CD4-positive, alpha-beta T cell (primary cell): ENCODE measurements at regions of chr12 and their contacts with region 1.

Region 1: GRCh38 chr12:95942524-95943329 is at the start of gene CCDC38:
- DNase-seq: peak; percentile 70 to 92 (median 79)
- ATAC-seq: peak; percentile 94
- H3K4me3 ChIP-seq: peak within 1 kb of the TSS; percentile 84
- H3K4me3 Mint-ChIP-seq: peak within 1 kb of the TSS; percentile 97
- H3K27ac ChIP-seq: peak within 1 kb of the TSS; percentile 61 to 76
- H3K27ac Mint-ChIP-seq: peak within 1 kb of the TSS; percentile 88
- H3K4me1 ChIP-seq: peaks cover 14% of the 10 kb centered on the region
- H3K4me1 Mint-ChIP-seq: peaks cover 10% of the 10 kb centered on the region
- H3K27me3 ChIP-seq: no peaks in the 10 kb centered on the region
- H3K27me3 Mint-ChIP-seq: no peaks in the 10 kb centered on the region
- CTCF ChIP-seq: no peak
- total RNA-seq, gene CCDC38: 0.11 TPM in 1 of 2 experiments, not detected in the other

Region 2: DNA sequence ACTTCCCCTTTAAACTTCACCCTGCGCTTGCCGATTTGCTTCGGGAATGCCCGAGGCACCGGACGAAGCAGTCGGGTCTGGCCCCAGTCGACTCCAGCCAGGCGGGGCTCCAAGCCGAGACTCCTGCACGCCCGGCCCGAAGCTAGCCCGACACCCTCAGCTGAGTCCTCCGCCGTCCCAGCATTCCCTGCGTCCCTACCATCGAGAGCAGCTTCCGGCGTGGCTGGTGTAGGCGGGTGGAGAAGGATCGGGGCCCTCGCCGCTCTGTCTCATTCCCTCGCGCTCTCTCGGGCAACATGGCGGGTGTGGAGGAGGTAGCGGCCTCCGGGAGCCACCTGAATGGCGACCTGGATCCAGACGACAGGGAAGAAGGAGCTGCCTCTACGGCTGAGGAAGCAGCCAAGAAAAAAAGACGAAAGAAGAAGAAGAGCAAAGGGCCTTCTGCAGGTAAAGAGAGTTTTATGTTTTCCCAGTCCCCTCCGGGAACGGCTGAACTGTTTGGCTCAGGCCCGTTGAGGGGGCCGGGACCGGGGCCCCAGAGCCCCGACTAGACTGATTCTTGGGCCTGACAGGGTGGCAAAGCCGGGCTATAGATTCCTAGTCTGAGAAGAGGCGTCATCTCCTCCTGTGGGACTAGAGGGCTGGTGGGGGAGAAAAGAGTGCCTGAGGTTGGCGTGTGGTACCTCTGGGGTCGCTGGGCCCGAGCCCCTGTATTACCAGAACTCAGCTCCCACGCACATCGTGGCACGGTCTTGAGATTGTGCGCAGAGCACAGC is 468.7 kb before region 1 on chr12 and contains the start of gene METAP2:
- CTCF ChIA-PET with region 1: no interaction called
- POLR2A ChIA-PET with region 1: interaction called, 10 read pairs
- intact Hi-C with region 1: loop called in 1 of 2 experiments (anchors 5 kb)
- DNase-seq: peak; percentile 82 to 95 (median 88)
- ATAC-seq: peak; percentile 96
- H3K4me3 ChIP-seq: peak within 1 kb of the TSS; percentile 92
- H3K4me3 Mint-ChIP-seq: peak within 1 kb of the TSS; percentile 100
- H3K27ac ChIP-seq: peak within 1 kb of the TSS; percentile 56 to 79
- H3K27ac Mint-ChIP-seq: peak within 1 kb of the TSS; percentile 92
- H3K4me1 ChIP-seq: peaks cover 32% of the 10 kb centered on the region
- H3K4me1 Mint-ChIP-seq: peaks cover 67% of the 10 kb centered on the region
- H3K27me3 ChIP-seq: no peaks in the 10 kb centered on the region
- H3K27me3 Mint-ChIP-seq: no peaks in the 10 kb centered on the region
- CTCF ChIP-seq: no peak
- total RNA-seq, gene METAP2: 60.2 to 66.3 TPM

Region 3: DNA sequence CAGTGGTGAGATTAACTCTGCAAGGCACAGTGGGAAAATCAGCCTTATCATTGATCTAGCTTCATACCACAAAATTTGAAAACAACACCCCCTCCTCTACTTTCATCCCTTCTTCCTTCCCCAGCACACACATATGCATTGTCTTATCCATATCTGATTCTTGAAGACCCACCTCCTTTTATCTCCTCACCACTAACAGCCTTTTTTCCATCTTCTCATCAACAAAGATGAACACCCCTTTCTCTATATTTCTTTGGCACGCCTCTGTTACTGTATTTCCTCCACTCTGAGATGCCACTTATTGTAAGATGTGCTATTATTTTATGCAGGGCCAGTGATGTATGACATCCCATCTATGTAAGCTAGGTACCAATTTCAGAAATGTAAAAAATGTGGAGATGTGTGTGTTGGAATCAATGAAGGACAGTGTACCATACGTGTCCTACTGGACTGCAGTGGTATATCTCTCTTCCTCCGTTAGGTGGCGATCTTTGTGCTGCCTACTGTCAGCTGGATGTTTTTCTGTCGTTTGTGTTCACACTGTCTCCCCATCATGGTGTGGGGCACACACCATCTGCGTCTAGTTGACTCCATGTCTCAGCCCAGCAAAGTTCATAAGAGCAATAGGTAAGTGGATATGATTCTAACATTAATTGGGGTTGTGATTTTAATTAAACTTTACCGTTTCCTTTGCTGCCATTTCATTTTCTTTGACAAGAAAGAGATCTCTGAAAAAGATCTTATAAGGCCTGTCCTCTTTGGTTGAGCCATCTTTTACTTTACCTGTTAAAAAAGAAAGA is 24.3 kb before region 1 on chr12:
- CTCF ChIA-PET with region 1: interaction called, 16 read pairs
- POLR2A ChIA-PET with region 1: interaction called, 3 read pairs
- intact Hi-C with region 1: no loop called
- DNase-seq: peak in 13 of 14 experiments; percentile 5 to 79 (median 22)
- ATAC-seq: peak; percentile 97
- H3K4me3 ChIP-seq: no peak overlapping the region
- H3K4me3 Mint-ChIP-seq: no peak overlapping the region
- H3K27ac ChIP-seq: no peak overlapping the region
- H3K27ac Mint-ChIP-seq: no peak overlapping the region
- H3K4me1 ChIP-seq: no peaks in the 10 kb centered on the region
- H3K4me1 Mint-ChIP-seq: no peaks in the 10 kb centered on the region
- H3K27me3 ChIP-seq: no peaks in the 10 kb centered on the region
- H3K27me3 Mint-ChIP-seq: peaks cover under 1% of the 10 kb centered on the region
- CTCF ChIP-seq: peak; percentile 86

Region 4: DNA sequence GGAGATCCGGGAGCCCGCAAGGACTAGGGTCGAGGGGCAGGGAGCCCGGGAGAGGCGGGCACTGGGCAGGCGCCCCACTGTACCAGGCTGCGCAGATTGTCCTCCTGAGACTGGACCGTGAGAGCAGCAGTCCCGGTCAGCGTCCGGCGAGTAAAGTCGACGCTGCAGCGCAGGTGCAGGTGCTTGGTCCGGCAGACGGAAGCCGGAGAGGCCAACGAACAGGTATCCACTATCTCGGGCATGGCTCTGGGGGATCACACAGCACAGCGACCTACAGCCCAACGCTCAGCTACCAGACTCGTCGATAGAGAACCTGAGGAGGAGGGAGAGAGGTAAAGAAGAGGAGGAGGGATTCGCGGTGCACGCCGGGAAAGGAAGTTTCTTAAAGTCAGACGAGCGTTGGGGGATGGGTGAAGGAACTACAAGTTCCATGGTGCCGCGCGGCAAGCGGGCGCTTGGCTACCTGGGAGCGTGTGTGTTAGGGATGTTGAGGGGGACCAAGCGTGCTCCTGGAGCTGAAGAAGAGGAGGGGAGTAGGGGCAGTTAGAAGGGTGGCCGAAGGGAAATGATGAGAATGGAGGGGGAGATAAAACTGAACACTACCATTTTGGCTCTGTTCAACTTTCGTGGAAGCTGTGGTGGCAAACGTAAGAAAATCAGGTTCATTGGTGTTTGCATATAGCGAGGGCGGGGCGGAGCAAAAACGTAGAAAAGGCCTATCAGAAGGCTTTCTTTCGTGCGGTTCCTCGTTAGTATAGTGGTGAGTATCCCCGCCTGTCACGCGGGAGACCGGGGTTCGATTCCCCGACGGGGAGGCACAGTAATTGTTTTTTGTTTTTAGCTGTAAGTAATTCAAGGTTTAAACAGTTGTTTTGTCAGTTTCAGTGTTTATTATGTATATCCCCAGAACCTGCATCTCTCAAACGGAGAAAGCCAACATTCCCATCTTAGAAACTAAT is 92.8 kb after region 1 on chr12 and contains the start of gene LTA4H:
- CTCF ChIA-PET with region 1: no interaction called
- POLR2A ChIA-PET with region 1: interaction called, 13 read pairs
- intact Hi-C with region 1: loop called in 1 of 2 experiments (anchors 5 kb)
- DNase-seq: peak; percentile 92 to 99 (median 96)
- ATAC-seq: peak; percentile 93
- H3K4me3 ChIP-seq: peak within 1 kb of the TSS; percentile 89
- H3K4me3 Mint-ChIP-seq: no peak within 1 kb of the TSS
- H3K27ac ChIP-seq: peak within 1 kb of the TSS; percentile 59 to 60
- H3K27ac Mint-ChIP-seq: no peak within 1 kb of the TSS
- H3K4me1 ChIP-seq: peaks cover 20% of the 10 kb centered on the region
- H3K4me1 Mint-ChIP-seq: peaks cover 11% of the 10 kb centered on the region
- H3K27me3 ChIP-seq: no peaks in the 10 kb centered on the region
- H3K27me3 Mint-ChIP-seq: no peaks in the 10 kb centered on the region
- CTCF ChIP-seq: no peak
- total RNA-seq, gene LTA4H: 43.0 to 44.0 TPM

Region 5: DNA sequence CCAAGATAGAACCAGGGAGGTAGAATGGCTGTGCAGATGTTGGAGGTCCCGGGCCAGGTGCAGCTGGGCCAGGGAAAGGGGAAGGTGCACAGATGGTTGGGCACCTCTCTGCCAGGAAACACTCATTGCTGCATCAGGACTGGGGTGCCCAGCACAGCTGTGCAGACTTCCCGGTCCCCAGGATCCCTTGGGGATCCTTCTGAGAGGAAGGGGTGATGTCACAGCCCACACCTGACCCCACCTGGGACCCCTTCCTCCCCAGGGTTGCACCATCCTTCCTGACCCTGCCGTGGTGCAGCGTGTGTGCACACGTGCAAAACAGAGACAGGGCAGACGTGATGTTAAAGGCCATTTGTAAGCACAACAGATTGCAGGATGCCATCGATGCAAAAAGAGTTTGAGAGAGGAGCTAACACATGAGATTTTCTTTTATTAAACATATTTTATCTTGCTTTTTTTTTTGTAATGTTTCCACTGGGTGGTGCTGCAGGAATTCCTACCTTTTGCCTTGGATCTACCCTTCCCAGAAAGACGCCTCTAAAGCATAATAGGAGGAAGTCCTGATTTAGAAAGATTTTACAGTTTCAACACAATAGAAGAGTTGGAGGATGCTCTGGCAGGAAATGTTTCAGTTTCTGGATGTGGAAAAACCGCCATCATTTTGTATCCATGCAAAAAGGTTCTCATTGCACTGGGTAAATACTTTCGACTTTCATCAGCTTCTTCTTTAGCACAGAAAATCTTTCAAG is 266.2 kb after region 1 on chr12:
- CTCF ChIA-PET with region 1: no interaction called
- POLR2A ChIA-PET with region 1: no interaction called
- intact Hi-C with region 1: loop called in 1 of 2 experiments (anchors 10 kb)
- DNase-seq: peak in 2 of 14 experiments; percentile 23 to 30
- ATAC-seq: no peak
- H3K4me3 ChIP-seq: peak overlapping the region; percentile 3
- H3K4me3 Mint-ChIP-seq: peak overlapping the region; percentile 87
- H3K27ac ChIP-seq: peak overlapping the region in 1 of 2 donors; percentile 46
- H3K27ac Mint-ChIP-seq: peak overlapping the region; percentile 82
- H3K4me1 ChIP-seq: peaks cover 87% of the 10 kb centered on the region
- H3K4me1 Mint-ChIP-seq: peaks cover 97% of the 10 kb centered on the region
- H3K27me3 ChIP-seq: no peaks in the 10 kb centered on the region
- H3K27me3 Mint-ChIP-seq: no peaks in the 10 kb centered on the region
- CTCF ChIP-seq: no peak

Region 6: DNA sequence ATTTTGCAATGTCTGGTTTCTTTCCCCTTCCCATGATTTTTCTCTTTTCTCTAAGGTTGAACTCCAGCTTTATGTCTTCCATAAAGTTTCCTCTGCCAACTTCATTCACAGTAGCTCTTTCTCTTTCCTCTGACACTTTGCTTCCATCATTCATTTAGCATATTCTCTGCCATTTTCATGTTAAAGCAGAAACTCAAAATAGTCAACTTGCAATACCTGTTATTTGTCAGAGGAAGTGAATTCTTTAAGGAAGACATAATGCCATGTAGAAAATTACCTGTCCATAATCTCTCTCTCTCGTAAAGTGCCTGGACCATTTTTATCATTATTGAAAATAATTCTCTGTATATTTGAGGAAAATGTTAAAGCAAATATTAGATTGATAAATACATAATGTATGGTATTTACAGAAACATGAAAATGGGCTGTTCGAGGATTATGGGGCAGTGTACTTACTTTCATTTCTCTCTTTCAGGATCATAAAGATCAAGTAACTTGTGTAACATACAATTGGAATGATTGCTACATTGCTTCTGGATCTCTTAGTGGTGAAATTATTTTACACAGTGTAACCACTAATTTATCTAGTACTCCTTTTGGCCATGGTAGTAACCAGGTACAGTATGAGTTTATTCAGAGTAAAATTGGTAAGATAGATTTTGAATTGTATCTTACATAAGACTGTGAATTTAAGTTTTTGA is 976.9 kb after region 1 on chr12:
- CTCF ChIA-PET with region 1: no interaction called
- POLR2A ChIA-PET with region 1: no interaction called
- intact Hi-C with region 1: loop called in 1 of 2 experiments (anchors 10 kb)
- DNase-seq: no peak
- ATAC-seq: no peak
- H3K4me3 ChIP-seq: no peak overlapping the region
- H3K4me3 Mint-ChIP-seq: no peak overlapping the region
- H3K27ac ChIP-seq: no peak overlapping the region
- H3K27ac Mint-ChIP-seq: no peak overlapping the region
- H3K4me1 ChIP-seq: no peaks in the 10 kb centered on the region
- H3K4me1 Mint-ChIP-seq: peaks cover 29% of the 10 kb centered on the region
- H3K27me3 ChIP-seq: no peaks in the 10 kb centered on the region
- H3K27me3 Mint-ChIP-seq: no peaks in the 10 kb centered on the region
- CTCF ChIP-seq: no peak